Breast epithelium (tissue), 4 donors: ENCODE measurements at regions of chr13 and their contacts with region 1.

Region 1: DNA sequence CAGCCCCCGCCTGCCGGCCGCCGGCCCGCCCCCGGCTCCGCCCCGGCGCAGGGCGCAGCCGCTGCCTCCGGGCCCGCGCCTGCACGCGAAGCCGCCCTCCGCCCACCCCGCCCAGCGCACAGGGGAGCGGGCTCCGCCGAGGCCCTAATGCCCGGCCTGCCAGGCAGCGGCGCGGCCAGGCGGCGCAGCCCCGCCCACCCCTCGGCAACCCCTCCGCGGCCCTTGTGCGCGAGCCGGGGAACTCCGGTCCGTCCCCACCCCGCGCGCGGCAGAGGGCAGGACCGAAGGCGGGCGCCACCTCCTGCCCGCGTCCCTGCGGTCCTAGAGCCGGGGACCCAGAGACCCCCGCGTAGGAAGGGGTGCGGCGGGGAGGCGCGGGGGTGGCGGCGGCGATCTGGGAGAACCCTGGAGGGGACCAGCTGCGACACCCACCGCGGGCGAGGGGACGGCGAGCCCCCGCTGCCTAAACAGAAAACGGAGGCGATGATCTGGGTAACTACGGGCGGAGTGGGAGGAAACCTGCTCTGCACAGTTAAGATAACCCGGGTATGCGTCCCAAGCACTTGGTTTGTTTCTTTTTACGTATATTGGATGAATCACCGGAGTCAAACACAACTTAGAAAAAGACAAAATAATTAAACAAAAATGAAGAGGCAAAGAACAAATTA is 350 bp upstream of the USP12 start:
- DNase-seq: peak; percentile 85 to 87
- H3K4me3 ChIP-seq: peak overlapping the region; percentile 80 to 99 (median 85)
- H3K27ac ChIP-seq: peak overlapping the region; percentile 94 to 98
- H3K4me1 ChIP-seq: peaks cover 0 to 14% of the 10 kb centered on the region in 2 donors
- H3K27me3 ChIP-seq: no peaks in the 10 kb centered on the region
- CTCF ChIP-seq: no peak
- POLR2A ChIP-seq: no peak

Region 2: GRCh38 chr13:27270594-27271520 is 98.9 kb after region 1 on chr13 and contains the start of gene RASL11A:
- intact Hi-C with region 1: loop called (anchors 10 kb)
- DNase-seq: peak; percentile 59 to 79
- H3K4me3 ChIP-seq: peak within 1 kb of the TSS; percentile 69 to 91 (median 79)
- H3K27ac ChIP-seq: peak within 1 kb of the TSS; percentile 85 to 96
- H3K4me1 ChIP-seq: no peaks in the 10 kb centered on the region
- H3K27me3 ChIP-seq: no peaks in the 10 kb centered on the region
- CTCF ChIP-seq: peak; percentile 79 to 93 (median 80)
- POLR2A ChIP-seq: no peak
- total RNA-seq, gene RASL11A: 20.8 to 62.2 (median 39.3) TPM